ENCODE measurements at regions of chr6 and their contacts with region 1.

Region 1: DNA sequence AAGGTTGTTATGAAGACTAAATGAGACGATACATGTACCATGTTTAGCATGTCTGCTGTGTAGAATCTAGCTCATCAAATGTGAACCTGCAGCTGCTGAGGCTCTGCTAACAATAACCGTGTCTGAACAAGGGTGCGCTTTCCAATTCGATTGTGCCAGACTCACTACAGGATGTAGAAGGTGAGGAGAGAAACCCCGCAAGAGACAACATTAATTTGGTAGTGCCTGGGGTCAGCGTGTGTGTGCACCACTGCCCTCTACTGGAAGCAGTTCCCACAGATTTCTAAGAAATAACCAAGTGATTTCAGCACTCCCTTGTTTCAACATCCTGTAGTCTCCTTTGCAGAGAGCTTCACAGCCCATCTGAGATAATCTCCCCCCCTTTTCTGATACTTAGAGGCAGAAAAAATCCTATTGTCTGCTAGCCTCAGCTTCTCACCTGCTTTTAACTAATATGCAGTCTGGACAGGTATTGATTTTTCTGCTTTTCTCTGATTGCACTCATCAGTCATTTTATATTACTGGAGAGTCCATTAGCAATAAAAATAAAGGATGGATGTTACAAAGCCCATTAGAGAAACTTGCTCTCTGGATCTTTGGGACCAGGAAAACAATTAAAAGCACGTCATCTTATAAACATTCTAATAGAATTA is 96.7 kb upstream of the BACH2 start:
- DNase-seq: peak; percentile 87
- ATAC-seq: peak; percentile 41
- H3K4me3 Mint-ChIP-seq: no peak overlapping the region
- H3K27ac Mint-ChIP-seq: peak overlapping the region; percentile 65
- H3K4me1 Mint-ChIP-seq: peaks cover 76% of the 10 kb centered on the region
- H3K27me3 Mint-ChIP-seq: no peaks in the 10 kb centered on the region

Region 2: DNA sequence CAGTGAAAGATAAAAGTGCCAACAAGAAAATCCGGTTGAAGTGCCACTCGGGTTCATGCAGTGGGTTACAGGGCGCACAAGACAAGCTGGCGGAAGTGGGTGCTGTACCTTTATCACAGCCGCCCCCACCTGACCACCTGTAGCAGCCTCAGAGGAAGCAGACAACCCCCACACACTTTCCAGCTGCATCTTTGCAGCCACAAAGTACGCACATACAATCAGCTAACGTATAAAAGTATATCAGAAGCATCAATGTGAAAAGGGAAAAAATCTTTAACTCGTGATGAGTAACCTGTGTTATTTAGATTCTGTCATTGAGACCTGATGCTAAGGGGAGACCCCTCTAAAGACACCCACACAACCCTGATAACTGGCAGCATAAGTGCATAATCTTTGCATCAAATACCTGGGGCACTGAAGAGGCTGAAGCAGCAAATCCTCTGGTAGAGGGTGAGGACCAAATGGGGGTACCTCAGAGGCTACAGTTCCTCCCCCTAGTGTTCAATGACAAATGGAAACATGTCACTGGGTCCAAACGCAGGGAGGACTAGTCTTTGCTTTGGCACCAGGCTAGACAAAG is 118.8 kb before region 1 on chr6:
- CTCF ChIA-PET with region 1: interaction called, 7 read pairs
- POLR2A ChIA-PET with region 1: interaction called, 3 read pairs
- intact Hi-C with region 1: loop called in 1 of 2 experiments (anchors 1 kb)
- DNase-seq: peak; percentile 96
- ATAC-seq: peak; percentile 89
- H3K4me3 Mint-ChIP-seq: peak overlapping the region; percentile 54
- H3K27ac Mint-ChIP-seq: peak overlapping the region; percentile 90
- H3K4me1 Mint-ChIP-seq: peaks cover 95% of the 10 kb centered on the region
- H3K27me3 Mint-ChIP-seq: no peaks in the 10 kb centered on the region

Region 3: DNA sequence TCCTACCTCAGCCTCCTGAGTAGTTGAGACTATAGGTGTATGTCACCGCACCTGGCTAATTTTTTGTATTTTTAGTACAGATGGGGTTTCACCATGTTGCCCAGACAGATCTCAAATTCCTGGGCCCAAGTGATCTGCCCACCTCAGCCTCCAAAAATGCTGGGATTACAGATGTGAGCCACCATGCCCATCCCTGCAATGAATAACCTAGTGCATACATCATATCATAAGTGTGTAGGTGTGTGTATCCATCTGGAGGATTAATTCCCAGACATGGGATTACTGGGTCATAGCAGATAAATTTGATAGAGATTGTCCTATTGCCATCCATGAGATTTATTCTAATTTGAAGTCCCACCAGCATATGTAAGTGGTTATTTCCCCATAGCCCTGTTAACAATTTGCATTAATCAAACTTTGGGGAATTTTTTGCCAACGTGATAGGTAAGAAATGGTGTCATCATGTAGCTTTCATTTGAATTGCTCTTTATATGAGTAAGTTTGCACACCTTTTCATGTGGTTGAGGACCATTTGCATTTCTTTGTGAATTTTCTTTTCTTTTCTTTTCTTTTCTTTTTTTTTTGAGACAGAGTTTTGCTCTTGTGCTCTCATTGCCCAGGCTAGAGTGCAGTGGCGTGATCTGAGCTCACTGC is 66.8 kb before region 1 on chr6:
- CTCF ChIA-PET with region 1: interaction called, 3 read pairs
- POLR2A ChIA-PET with region 1: interaction called, 3 read pairs
- intact Hi-C with region 1: loop called in 1 of 2 experiments (anchors 2 kb)
- DNase-seq: peak; percentile 43
- ATAC-seq: peak; percentile 85
- H3K4me3 Mint-ChIP-seq: no peak overlapping the region
- H3K27ac Mint-ChIP-seq: peak overlapping the region; percentile 58
- H3K4me1 Mint-ChIP-seq: peaks cover 48% of the 10 kb centered on the region
- H3K27me3 Mint-ChIP-seq: no peaks in the 10 kb centered on the region

Region 4: GRCh38 chr6:90383196-90383822 is 10.0 kb before region 1 on chr6:
- CTCF ChIA-PET with region 1: interaction called, 20 read pairs
- POLR2A ChIA-PET with region 1: interaction called, 6 read pairs
- intact Hi-C with region 1: no loop called
- DNase-seq: peak; percentile 41
- ATAC-seq: peak; percentile 92
- H3K4me3 Mint-ChIP-seq: no peak overlapping the region
- H3K27ac Mint-ChIP-seq: no peak overlapping the region
- H3K4me1 Mint-ChIP-seq: peaks cover 47% of the 10 kb centered on the region
- H3K27me3 Mint-ChIP-seq: peaks cover 6% of the 10 kb centered on the region

Region 5: DNA sequence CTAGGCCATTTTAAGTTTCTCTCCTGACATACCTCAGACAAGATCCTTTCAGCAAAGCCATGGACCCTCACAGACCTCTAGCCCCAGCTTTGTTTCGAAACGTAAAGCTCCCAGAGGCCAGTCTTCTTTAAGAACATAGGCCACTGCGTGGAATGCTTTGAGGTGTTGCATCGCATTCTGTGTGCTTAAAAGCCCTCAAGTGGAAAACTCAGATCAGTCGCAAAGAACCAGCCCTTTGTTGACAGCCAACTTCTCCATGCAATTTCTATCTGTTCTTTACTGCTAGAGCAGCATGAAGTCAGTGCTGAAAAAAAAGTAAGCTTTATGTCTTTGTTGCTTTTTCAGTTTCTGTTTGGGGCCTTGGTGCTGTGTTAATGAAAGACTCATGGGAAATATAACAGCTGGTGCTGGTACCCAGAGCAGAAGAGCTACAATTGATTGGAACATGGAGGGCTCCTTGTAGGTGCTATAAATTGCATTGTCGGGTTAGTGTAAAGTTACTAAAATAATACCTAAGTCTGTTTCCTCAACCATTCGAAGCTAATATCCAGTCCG is 50.9 kb after region 1 on chr6:
- CTCF ChIA-PET with region 1: interaction called, 7 read pairs
- POLR2A ChIA-PET with region 1: interaction called, 6 read pairs
- intact Hi-C with region 1: loop called in 1 of 2 experiments (anchors 1 kb)
- DNase-seq: no peak
- ATAC-seq: peak; percentile 42
- H3K4me3 Mint-ChIP-seq: peak overlapping the region; percentile 20
- H3K27ac Mint-ChIP-seq: peak overlapping the region; percentile 99
- H3K4me1 Mint-ChIP-seq: peaks cover 58% of the 10 kb centered on the region
- H3K27me3 Mint-ChIP-seq: no peaks in the 10 kb centered on the region

Region 6: DNA sequence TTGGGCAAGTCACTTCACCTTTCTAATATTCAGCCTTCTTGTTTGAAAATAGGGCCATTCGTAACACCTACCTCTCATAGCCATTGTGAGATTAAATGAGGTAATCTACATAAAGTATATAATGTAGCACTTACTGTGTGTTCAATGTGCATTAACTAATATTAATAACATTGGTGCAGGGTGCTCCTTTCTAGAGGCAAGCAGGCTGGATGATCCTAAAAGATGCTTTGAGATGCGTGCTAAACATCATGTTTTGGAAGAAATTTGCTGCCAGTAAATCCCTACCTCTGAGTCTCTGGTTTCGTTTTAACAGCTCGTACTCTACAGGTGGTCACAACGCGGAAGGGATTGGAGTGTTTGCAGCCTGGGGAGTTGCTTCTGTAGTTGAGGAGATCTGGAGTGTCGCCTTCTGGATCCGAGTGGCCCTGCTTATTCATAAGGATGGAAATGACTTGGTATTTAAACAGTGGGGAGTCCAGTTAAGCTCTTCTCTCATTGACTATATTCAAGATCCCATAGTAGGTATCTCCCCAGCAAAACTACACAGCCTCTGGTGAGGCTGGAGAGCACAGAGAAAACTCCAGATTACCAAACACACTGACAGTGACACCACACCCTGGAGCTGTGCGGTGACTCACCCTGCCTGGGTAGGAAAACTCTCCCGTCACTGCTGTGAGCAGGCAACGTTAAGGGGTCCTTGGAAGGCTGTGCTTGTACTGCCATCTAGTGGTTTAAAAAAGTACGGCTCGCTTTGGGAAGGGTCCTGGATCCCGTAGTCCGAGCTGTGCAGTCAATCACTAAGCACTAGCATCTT is 85.6 kb after region 1 on chr6:
- CTCF ChIA-PET with region 1: interaction called, 37 read pairs
- POLR2A ChIA-PET with region 1: interaction called, 10 read pairs
- intact Hi-C with region 1: loop called (anchors 1 kb)
- DNase-seq: peak; percentile 93
- ATAC-seq: peak; percentile 93
- H3K4me3 Mint-ChIP-seq: no peak overlapping the region
- H3K27ac Mint-ChIP-seq: peak overlapping the region; percentile 85
- H3K4me1 Mint-ChIP-seq: peaks cover 61% of the 10 kb centered on the region
- H3K27me3 Mint-ChIP-seq: no peaks in the 10 kb centered on the region

Region 7: DNA sequence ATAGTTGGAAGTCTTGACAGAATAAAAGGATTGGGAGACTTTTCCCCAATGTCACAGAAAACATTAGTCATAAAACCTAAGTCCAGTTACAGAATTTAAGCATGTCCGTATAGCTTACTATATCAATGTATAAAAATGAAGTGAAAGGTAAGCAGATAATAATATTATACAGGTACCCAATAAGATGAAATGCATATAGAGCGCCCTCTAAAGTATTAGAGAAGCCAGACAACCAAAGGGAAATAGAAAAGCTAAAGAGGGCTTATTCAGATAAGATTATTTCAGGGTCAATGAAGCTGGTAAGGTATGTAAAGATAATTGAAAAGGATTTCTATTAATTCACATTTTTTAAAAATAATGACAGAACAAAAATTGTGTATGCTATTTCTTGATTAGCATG is 1141.3 kb after region 1 on chr6:
- CTCF ChIA-PET with region 1: no interaction called
- POLR2A ChIA-PET with region 1: no interaction called
- intact Hi-C with region 1: no loop called
- DNase-seq: no peak
- ATAC-seq: no peak
- H3K4me3 Mint-ChIP-seq: no peak overlapping the region
- H3K27ac Mint-ChIP-seq: no peak overlapping the region
- H3K4me1 Mint-ChIP-seq: no peaks in the 10 kb centered on the region
- H3K27me3 Mint-ChIP-seq: no peaks in the 10 kb centered on the region